Heart right ventricle (tissue), 16 donors: ENCODE measurements at regions of chr22 and their contacts with region 1.

Region 1: GRCh38 chr22:29635734-29636357 is 32.4 kb downstream of the NF2 start:
- DNase-seq: no peak
- ATAC-seq: peak in 3 of 8 donors; percentile 44 to 63 (median 48)
- H3K4me3 ChIP-seq: no peak overlapping the region
- H3K27ac ChIP-seq: no peak overlapping the region
- H3K4me1 ChIP-seq: peaks cover 0 to 33% (median 4%) of the 10 kb centered on the region in 9 donors
- H3K27me3 ChIP-seq: no peaks in the 10 kb centered on the region
- CTCF ChIP-seq: peak; percentile 15 to 71 (median 56)

Region 2: DNA sequence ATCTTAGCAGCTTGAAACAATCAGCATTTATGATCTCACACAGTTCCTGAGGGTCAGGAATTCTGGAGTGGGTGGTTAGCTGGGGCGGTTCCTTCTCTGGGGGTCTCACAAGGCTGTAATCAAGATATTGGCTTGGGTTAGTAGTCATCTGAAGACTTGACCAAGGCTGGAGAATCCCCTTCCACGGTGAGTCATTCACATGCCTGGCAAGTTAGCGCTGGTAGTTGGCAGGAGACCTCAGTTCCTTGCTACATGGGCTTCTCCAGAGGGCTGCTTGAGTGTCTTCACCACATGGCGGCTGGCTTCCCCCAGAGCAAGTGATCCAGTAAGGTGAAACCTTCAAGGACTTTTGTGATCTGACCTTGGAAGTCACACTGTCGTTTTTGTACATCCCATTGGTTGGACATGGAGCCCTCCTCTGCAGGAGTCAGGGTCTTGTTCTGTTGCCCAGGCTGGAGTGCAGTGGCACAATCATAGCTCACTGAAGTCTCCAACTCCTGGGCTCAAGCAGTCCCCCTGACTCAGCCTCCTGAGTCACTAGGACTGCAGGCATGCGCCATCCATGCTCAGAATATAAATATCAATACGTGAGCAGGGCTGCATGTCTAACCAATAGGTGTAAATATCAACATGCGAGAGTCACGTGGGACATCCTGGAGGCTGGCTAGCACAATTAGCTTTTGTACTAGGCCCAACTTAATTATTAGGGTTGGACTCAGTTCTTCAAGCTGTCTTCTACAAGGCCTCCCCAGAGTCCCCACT is 47.7 kb before region 1 on chr22:
- intact Hi-C with region 1: no loop called
- DNase-seq: no peak
- ATAC-seq: peak in 1 of 8 donors; percentile 25
- H3K4me3 ChIP-seq: no peak overlapping the region
- H3K27ac ChIP-seq: no peak overlapping the region
- H3K4me1 ChIP-seq: peaks cover 0 to 4% (median 0%) of the 10 kb centered on the region in 9 donors
- H3K27me3 ChIP-seq: no peaks in the 10 kb centered on the region
- CTCF ChIP-seq: no peak

Region 3: DNA sequence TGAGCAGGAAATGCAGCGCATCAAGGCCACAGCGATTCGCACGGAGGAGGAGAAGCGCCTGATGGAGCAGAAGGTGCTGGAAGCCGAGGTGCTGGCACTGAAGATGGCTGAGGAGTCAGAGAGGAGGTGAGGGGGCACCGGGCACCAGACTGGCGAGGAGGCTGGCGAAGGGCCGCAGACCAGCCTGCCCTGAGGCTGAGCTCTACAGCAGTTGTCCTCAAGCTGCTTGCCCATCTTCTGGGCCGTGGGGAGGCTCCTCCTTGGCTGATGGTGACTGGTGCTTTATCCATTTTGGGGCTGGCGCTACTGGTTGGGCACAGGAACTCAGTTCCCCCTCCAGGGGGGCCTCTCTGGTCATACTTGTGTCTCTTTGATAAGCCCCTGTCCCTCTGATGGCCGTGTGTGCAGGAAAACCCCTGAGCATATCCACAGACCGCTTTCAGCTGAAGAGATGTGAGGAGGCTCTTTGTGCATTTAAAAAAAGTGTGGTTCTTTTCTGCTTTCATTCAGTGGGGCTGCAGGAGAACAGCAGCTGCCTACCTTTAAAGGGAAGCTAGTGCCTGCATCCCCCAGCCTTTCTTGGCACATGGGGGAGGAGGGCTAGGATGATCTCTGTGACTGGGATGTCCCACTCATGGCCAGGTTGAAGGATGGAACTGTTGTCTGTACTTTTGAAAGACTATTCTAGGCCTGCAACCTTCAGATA is 37.7 kb after region 1 on chr22:
- intact Hi-C with region 1: no loop called
- DNase-seq: no peak
- ATAC-seq: no peak
- H3K4me3 ChIP-seq: no peak overlapping the region
- H3K27ac ChIP-seq: no peak overlapping the region
- H3K4me1 ChIP-seq: no peaks in the 10 kb centered on the region
- H3K27me3 ChIP-seq: no peaks in the 10 kb centered on the region
- CTCF ChIP-seq: no peak

Region 4: GRCh38 chr22:29766632-29767170 is 130.9 kb after region 1 on chr22 and contains the start of gene ZMAT5:
- intact Hi-C with region 1: no loop called
- DNase-seq: peak; percentile 91 to 95
- ATAC-seq: peak; percentile 96 to 99 (median 99)
- H3K4me3 ChIP-seq: peak within 1 kb of the TSS; percentile 54 to 97 (median 86)
- H3K27ac ChIP-seq: peak within 1 kb of the TSS; percentile 89 to 97 (median 94)
- H3K4me1 ChIP-seq: peaks cover 6 to 45% (median 31%) of the 10 kb centered on the region in 9 donors
- H3K27me3 ChIP-seq: no peaks in the 10 kb centered on the region
- CTCF ChIP-seq: no peak
- total RNA-seq, gene ZMAT5: 15.1 to 23.9 (median 19.3) TPM

Region 5: DNA sequence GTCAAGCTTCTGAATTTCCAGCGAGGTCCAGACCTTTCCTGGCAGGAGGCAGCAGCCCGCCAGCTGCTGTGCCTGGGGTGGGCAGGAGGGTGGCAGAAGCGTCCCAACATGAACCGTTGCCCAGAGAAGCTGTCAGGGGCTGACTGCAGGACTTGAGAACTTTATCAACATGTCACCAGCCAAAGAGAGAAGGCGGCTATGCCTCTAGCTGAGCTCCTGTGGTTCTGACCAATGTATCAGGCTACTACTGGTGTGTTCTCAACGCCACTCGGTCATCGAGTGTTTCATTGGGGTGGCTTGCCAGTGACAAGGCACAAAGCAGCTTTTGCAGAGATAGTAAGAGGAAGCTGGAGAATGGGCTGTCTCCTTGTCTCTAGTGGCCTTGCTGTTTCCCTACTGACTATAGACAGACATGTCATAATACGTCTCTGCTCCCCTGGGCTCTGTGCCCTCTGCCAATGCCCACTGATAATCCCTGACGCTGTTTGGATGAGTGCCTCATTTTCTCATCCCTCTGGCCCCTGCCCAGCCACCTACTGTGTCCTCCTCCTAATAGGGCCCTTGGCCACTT is 219.8 kb after region 1 on chr22:
- intact Hi-C with region 1: no loop called
- DNase-seq: peak; percentile 69 to 79
- ATAC-seq: peak; percentile 83 to 97 (median 96)
- H3K4me3 ChIP-seq: no peak overlapping the region
- H3K27ac ChIP-seq: peak overlapping the region; percentile 30 to 92 (median 70)
- H3K4me1 ChIP-seq: peaks cover 0 to 28% (median 5%) of the 10 kb centered on the region in 9 donors
- H3K27me3 ChIP-seq: no peaks in the 10 kb centered on the region
- CTCF ChIP-seq: peak in 6 of 9 donors; percentile 13 to 59 (median 40)

Region 6: DNA sequence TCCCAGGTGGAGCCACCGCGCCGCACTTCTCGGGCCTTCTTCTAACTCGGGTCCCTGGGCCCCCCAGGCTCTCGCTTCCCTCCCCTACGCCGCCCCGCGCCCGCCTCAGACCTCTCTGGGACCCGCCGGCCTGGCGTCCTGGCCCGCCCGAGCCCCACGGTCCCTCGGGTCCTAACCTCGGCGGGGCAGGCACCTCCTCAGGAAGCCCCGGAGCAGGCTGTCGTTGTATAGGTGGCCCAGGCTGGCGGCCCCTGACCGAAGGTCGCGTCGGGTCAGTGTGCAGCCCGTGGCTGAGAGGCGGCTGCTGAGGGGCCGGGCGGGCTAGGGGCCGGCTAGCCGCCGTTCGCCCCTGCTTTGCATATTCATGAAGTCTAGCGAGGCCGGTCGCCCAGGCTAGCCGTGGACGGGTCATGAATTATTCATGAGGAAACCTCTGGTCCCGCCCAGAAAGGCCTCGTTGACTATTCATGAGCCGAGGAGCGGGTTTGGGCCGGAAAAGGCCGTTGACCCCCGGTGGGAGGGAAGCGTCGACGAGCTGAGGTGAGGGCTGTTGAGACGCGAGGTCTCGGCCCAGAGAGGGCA is 444.2 kb after region 1 on chr22 and contains the start of gene HORMAD2:
- intact Hi-C with region 1: loop called in 6 of 10 experiments (anchors 5 to 10 kb)
- DNase-seq: peak in 1 of 2 donors; percentile 9
- ATAC-seq: peak in 1 of 8 donors; percentile 56
- H3K4me3 ChIP-seq: peak within 1 kb of the TSS in 7 of 10 donors; percentile 18 to 43 (median 33)
- H3K27ac ChIP-seq: no peak within 1 kb of the TSS
- H3K4me1 ChIP-seq: peaks cover 0 to 7% (median 4%) of the 10 kb centered on the region in 9 donors
- H3K27me3 ChIP-seq: peaks cover 0 to 48% (median 37%) of the 10 kb centered on the region in 7 donors
- CTCF ChIP-seq: no peak
- total RNA-seq, gene HORMAD2: not detected

Region 7: GRCh38 chr22:30089655-30089974 is 453.8 kb after region 1 on chr22:
- intact Hi-C with region 1: loop called in 7 of 10 experiments (anchors 5 to 10 kb)
- DNase-seq: no peak
- ATAC-seq: no peak
- H3K4me3 ChIP-seq: no peak overlapping the region
- H3K27ac ChIP-seq: no peak overlapping the region
- H3K4me1 ChIP-seq: peaks cover 0 to 7% (median 0%) of the 10 kb centered on the region in 9 donors
- H3K27me3 ChIP-seq: peaks cover 0 to 24% (median 11%) of the 10 kb centered on the region in 7 donors
- CTCF ChIP-seq: no peak

Region 8: GRCh38 chr22:30094804-30095203 is 459.0 kb after region 1 on chr22:
- intact Hi-C with region 1: loop called in 1 of 10 experiments (anchors 5 kb)
- DNase-seq: no peak
- ATAC-seq: no peak
- H3K4me3 ChIP-seq: no peak overlapping the region
- H3K27ac ChIP-seq: no peak overlapping the region
- H3K4me1 ChIP-seq: no peaks in the 10 kb centered on the region
- H3K27me3 ChIP-seq: peaks cover 0 to 58% (median 33%) of the 10 kb centered on the region in 7 donors
- CTCF ChIP-seq: no peak